Calu3 (cell line): ENCODE measurements at regions of chr6 and their contacts with region 1.

Region 1: DNA sequence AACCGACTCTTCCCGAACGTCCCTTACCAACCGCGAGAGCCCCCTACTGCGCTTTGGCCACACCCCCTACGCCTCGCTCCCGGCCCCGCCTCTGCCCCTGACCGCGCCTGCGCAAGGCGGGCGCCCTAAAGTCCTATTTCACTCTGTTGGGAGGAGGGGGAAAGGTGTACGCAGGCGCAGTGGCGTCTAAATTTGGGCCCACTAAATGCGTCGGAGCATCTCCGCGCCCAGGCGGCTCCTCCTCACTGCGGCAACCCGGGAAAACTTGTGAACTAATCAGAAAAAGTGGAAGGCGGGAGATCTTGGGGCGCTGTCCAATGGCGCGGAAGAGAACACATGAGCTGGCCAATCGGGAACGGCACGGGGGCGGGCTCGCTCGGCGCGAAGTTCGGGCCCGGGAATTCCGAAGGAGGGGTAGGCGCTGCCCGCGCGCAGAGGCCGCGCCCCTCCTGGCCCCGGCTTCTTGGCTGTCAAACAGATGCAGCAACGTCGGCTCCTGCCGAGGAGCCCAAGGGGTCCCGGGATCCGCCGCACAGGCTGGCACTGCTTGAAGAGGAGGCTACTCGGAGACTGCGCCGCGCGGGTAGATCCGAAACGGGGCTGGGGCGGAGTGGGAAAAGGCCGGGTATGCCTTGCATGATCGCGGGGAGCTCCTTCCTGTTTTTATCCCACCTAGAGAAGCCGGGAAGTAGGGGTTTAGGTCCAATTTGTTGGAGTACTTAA is at the start of gene TCF19:
- DNase-seq: peak; percentile 100
- H3K4me3 Mint-ChIP-seq: peak within 1 kb of the TSS; percentile 99
- H3K27ac Mint-ChIP-seq: peak within 1 kb of the TSS; percentile 91
- H3K4me1 Mint-ChIP-seq: peaks cover 53% of the 10 kb centered on the region
- H3K27me3 Mint-ChIP-seq: no peaks in the 10 kb centered on the region
- CTCF ChIP-seq: no peak
- total RNA-seq, gene TCF19: 43.2 and 49.5 TPM in 2 replicates

Region 2: GRCh38 chr6:31180502-31180901 is 22.2 kb after region 1 on chr6:
- CTCF ChIA-PET with region 1: interaction called, 11 read pairs
- intact Hi-C with region 1: loop called (anchors 2 kb)
- DNase-seq: peak; percentile 98
- H3K4me3 Mint-ChIP-seq: peak overlapping the region; percentile 91
- H3K27ac Mint-ChIP-seq: peak overlapping the region; percentile 90
- H3K4me1 Mint-ChIP-seq: peaks cover 48% of the 10 kb centered on the region
- H3K27me3 Mint-ChIP-seq: no peaks in the 10 kb centered on the region
- CTCF ChIP-seq: no peak